ENCODE measurements at regions of chr4 and their contacts with region 1.

Region 1: DNA sequence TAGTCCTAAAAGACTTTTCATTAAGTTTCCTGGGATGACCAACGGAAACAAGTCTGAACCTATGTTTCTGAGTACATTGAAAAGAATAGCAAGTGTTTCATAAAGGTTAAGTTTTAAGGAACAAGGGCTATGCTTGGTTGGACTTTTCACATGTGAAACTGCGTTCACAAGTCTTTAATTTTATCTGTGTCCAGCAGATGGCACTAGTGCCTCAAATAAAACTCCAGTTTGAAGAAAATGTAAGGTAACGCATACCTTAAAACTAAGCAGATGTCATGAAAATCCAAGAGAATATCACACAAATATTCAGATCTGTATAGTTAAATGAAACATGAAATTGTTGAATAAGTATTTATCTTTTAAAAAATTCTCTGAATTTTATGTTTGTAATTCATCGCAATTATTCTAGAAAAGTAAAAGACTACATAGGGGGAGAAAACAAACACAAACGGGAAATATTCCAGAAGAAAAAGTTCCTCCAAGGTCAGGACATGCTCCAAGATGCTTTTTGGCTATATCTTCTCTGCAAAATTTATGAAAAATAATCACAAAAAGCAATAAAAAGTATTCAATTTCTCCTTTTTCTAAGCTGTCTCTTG is 89.6 kb upstream of the MAD2L1 start:
- DNase-seq: peak in 1 of 2 experiments; percentile 56
- H3K4me3 ChIP-seq: no peak overlapping the region
- H3K4me3 Mint-ChIP-seq: no peak overlapping the region
- H3K27ac Mint-ChIP-seq: no peak overlapping the region
- H3K4me1 ChIP-seq: no peaks in the 10 kb centered on the region
- H3K4me1 Mint-ChIP-seq: no peaks in the 10 kb centered on the region
- H3K27me3 ChIP-seq: no peaks in the 10 kb centered on the region
- H3K27me3 Mint-ChIP-seq: peaks cover 6% of the 10 kb centered on the region
- CTCF ChIP-seq: peak; percentile 28 to 57

Region 2: GRCh38 chr4:120286813-120287212 is 130.6 kb after region 1 on chr4:
- CTCF ChIA-PET with region 1: no interaction called
- POLR2A ChIA-PET with region 1: no interaction called
- intact Hi-C with region 1: loop called (anchors 1 kb)
- DNase-seq: no peak
- H3K4me3 ChIP-seq: no peak overlapping the region
- H3K4me3 Mint-ChIP-seq: no peak overlapping the region
- H3K27ac Mint-ChIP-seq: no peak overlapping the region
- H3K4me1 ChIP-seq: no peaks in the 10 kb centered on the region
- H3K4me1 Mint-ChIP-seq: no peaks in the 10 kb centered on the region
- H3K27me3 ChIP-seq: no peaks in the 10 kb centered on the region
- H3K27me3 Mint-ChIP-seq: no peaks in the 10 kb centered on the region
- CTCF ChIP-seq: peak in 1 of 2 experiments; percentile 30

Region 3: GRCh38 chr4:120709991-120710390 is 553.8 kb after region 1 on chr4:
- CTCF ChIA-PET with region 1: no interaction called
- POLR2A ChIA-PET with region 1: no interaction called
- intact Hi-C with region 1: loop called (anchors 10 kb)
- DNase-seq: no peak
- H3K4me3 ChIP-seq: no peak overlapping the region
- H3K4me3 Mint-ChIP-seq: no peak overlapping the region
- H3K27ac Mint-ChIP-seq: no peak overlapping the region
- H3K4me1 ChIP-seq: no peaks in the 10 kb centered on the region
- H3K4me1 Mint-ChIP-seq: no peaks in the 10 kb centered on the region
- H3K27me3 ChIP-seq: no peaks in the 10 kb centered on the region
- H3K27me3 Mint-ChIP-seq: no peaks in the 10 kb centered on the region
- CTCF ChIP-seq: no peak

Region 4: DNA sequence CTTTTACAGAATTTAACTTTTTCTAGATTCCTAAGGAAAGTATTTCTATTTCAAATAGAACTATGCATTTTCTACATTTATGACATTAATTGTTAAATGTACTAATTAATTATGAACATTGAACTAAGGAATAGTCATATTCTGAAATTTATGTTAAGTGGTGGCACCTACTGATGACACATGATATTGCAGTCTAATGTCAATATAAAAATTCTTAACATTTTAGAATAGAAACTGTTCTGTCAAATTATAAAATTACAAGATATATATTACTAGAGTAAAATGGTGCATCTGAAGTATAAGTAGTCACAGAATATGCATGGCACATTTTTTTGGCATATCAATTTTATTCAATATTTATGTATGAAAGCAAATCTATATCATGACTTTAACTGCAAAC is 956.3 kb after region 1 on chr4:
- CTCF ChIA-PET with region 1: no interaction called
- POLR2A ChIA-PET with region 1: no interaction called
- intact Hi-C with region 1: loop called (anchors 5 kb)
- DNase-seq: no peak
- H3K4me3 ChIP-seq: no peak overlapping the region
- H3K4me3 Mint-ChIP-seq: no peak overlapping the region
- H3K27ac Mint-ChIP-seq: no peak overlapping the region
- H3K4me1 ChIP-seq: no peaks in the 10 kb centered on the region
- H3K4me1 Mint-ChIP-seq: no peaks in the 10 kb centered on the region
- H3K27me3 ChIP-seq: no peaks in the 10 kb centered on the region
- H3K27me3 Mint-ChIP-seq: peaks cover 3% of the 10 kb centered on the region
- CTCF ChIP-seq: peak in 1 of 2 experiments; percentile 42